Cardiac septum (tissue), 1 donor: ENCODE measurements at regions of chr15 and their contacts with region 1.

Region 1: GRCh38 chr15:99704444-99704838 is 28.8 kb downstream of the LYSMD4 start:
- DNase-seq: no peak

Region 2: DNA sequence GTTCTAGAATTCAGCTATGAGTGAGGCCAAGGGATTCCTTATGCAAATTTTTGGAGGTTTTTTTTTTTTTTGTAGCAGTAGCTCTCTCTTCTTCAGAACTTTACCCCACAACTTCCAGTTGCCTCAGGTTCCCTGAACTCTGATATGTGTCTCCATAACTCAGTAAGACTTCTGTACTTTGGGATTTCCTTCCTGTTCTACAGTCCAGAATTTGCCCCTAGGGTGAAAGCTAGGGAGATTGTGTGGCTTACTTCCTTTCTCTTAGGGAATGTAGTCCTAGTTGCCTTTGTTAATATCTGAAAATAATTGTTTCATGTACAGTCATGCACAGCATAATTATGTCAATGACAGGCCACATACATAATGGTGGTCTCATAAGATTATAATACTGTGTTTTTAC is 422.3 kb before region 1 on chr15:
- intact Hi-C with region 1: loop called (anchors 5 kb)
- DNase-seq: no peak

Region 3: GRCh38 chr15:99409097-99409473 is 295.4 kb before region 1 on chr15:
- intact Hi-C with region 1: loop called (anchors 5 kb)
- DNase-seq: no peak